ENCODE measurements at regions of chr6 and their contacts with region 1.

Region 1: GRCh38 chr6:3742426-3743344 is 8.8 kb downstream of the PXDC1 start:
- DNase-seq: peak; percentile 84 to 87
- H3K4me3 ChIP-seq: no peak overlapping the region
- H3K27ac ChIP-seq: peak overlapping the region; percentile 68 to 75
- H3K4me1 ChIP-seq: peaks cover 0 to 38% of the 10 kb centered on the region in 2 donors
- H3K27me3 ChIP-seq: no peaks in the 10 kb centered on the region
- CTCF ChIP-seq: peak; percentile 90 to 96 (median 92)
- POLR2A ChIP-seq: no peak

Region 2: GRCh38 chr6:3825851-3826581 is 83.3 kb after region 1 on chr6:
- intact Hi-C with region 1: loop called (anchors 10 kb)
- DNase-seq: peak; percentile 90 to 92
- H3K4me3 ChIP-seq: peak overlapping the region in 1 of 2 donors; percentile 18
- H3K27ac ChIP-seq: peak overlapping the region; percentile 91 to 93
- H3K4me1 ChIP-seq: peaks cover 0 to 4% of the 10 kb centered on the region in 2 donors
- H3K27me3 ChIP-seq: no peaks in the 10 kb centered on the region
- CTCF ChIP-seq: no peak
- POLR2A ChIP-seq: no peak

Region 3: DNA sequence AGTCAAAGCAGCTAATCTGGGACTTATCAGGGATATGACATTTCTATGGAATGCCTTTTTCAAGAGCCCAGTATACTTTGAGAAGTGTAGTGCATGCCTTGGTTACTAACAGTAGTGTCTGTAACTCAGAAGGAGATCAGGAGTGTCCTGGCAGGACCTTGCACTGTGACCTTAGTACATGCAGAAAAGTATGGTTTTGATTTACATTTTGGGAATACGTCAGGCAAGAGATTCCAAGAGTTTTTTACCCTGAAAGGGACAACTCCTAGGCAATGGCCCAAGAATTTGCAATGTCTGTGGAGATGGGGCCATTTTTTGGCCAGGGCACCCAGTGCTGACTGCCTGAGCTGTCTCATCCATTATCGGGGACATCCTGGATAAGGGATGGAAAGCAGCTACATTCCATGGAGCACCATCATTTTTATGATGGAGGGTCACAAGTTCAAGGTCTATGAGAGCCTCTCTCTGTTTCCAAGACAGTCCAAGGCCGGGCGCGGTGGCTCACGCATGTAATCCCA is 186.7 kb after region 1 on chr6:
- intact Hi-C with region 1: loop called (anchors 5 kb)
- DNase-seq: peak; percentile 38 to 78
- H3K4me3 ChIP-seq: no peak overlapping the region
- H3K27ac ChIP-seq: peak overlapping the region in 1 of 2 donors; percentile 41
- H3K4me1 ChIP-seq: no peaks in the 10 kb centered on the region
- H3K27me3 ChIP-seq: no peaks in the 10 kb centered on the region
- CTCF ChIP-seq: no peak
- POLR2A ChIP-seq: no peak

Region 4: GRCh38 chr6:3990692-3991501 is 248.2 kb after region 1 on chr6:
- intact Hi-C with region 1: loop called (anchors 5 kb)
- DNase-seq: peak; percentile 88 to 91
- H3K4me3 ChIP-seq: peak overlapping the region; percentile 30 to 34
- H3K27ac ChIP-seq: peak overlapping the region; percentile 62 to 63
- H3K4me1 ChIP-seq: no peaks in the 10 kb centered on the region
- H3K27me3 ChIP-seq: no peaks in the 10 kb centered on the region
- CTCF ChIP-seq: peak; percentile 79 to 88 (median 84)
- POLR2A ChIP-seq: no peak

Region 5: DNA sequence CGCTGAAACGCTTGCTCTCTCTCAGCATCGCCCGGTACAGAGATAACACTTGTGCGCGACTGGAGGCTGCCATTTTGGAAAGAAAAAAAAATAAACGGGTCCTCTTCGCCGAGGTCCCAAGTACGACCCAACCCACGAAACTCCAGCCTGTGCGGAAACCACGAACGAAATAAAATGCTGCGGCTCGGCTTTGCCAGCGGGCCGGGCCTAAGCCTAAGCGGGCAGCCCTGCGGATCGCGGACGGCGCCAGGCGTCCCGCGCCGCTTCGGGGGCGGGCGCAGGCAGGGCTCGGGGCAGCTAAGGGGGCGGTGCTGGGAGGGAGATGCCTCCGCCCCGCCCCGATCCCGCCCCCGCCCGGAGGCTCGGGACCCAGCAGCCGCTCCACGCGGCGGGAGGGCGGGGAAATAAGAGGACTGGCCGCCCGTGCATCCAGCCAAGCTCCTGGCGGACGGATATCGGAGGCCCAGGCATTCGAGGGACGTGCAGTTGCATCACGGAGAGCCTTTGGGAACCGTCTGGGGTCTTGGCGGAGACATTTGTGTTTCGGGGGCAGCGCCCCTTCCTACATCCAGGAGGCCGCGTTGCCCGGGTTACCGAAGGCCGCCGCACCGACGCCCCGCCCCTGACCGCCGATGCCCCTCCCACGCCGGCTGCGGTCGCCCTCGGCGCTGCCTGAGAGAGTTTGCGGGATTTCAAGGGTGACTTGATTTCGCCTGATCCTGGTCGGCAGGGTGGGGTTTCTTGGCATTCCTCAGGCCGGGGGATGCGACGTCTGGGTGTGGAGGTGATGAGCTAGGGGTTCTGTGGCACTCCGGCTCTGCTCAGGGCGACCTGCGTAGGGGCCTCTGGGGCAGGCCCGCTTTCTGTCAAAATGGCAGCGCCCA is 1518.2 kb after region 1 on chr6 and contains the starts of genes FARS2 and LYRM4:
- intact Hi-C with region 1: no loop called
- DNase-seq: peak; percentile 82 to 90
- H3K4me3 ChIP-seq: peak within 1 kb of the TSS; percentile 73 to 80
- H3K27ac ChIP-seq: peak within 1 kb of the TSS; percentile 96 to 97
- H3K4me1 ChIP-seq: peaks cover 0 to 8% of the 10 kb centered on the region in 2 donors
- H3K27me3 ChIP-seq: no peaks in the 10 kb centered on the region
- CTCF ChIP-seq: peak in 2 of 4 experiments; percentile 13 to 15
- POLR2A ChIP-seq: peak in 1 of 2 donors; percentile 45
- total RNA-seq, gene FARS2: 14.4 to 32.5 (median 25.6) TPM
- total RNA-seq, gene LYRM4: 3.1 to 33.0 (median 15.7) TPM